B cell (primary cell): ENCODE measurements at regions of chr14 and their contacts with region 1.

Region 1: GRCh38 chr14:53306267-53306721 is 153.2 kb upstream of the DDHD1 start:
- DNase-seq: peak; percentile 52
- ATAC-seq: peak; percentile 36
- H3K4me3 ChIP-seq: peak overlapping the region in 3 of 5 experiments; percentile 26 to 37 (median 29)
- H3K4me3 Mint-ChIP-seq: peak overlapping the region; percentile 23
- H3K27ac ChIP-seq: no peak overlapping the region
- H3K27ac Mint-ChIP-seq: no peak overlapping the region
- H3K4me1 ChIP-seq: peaks cover 6 to 9% of the 10 kb centered on the region in 2 donors
- H3K4me1 Mint-ChIP-seq: peaks cover 11% of the 10 kb centered on the region
- H3K27me3 ChIP-seq: peaks cover 0 to 13% (median 4%) of the 10 kb centered on the region in 4 experiments
- H3K27me3 Mint-ChIP-seq: peaks cover 19% of the 10 kb centered on the region
- CTCF ChIP-seq: peak; percentile 78

Region 2: GRCh38 chr14:51996148-51996746 is 1310.0 kb before region 1 on chr14:
- CTCF ChIA-PET with region 1: no interaction called
- POLR2A ChIA-PET with region 1: interaction called, 10 read pairs
- intact Hi-C with region 1: no loop called
- DNase-seq: peak; percentile 53
- ATAC-seq: no peak
- H3K4me3 ChIP-seq: no peak overlapping the region
- H3K4me3 Mint-ChIP-seq: no peak overlapping the region
- H3K27ac ChIP-seq: no peak overlapping the region
- H3K27ac Mint-ChIP-seq: no peak overlapping the region
- H3K4me1 ChIP-seq: peaks cover 0 to 5% of the 10 kb centered on the region in 2 donors
- H3K4me1 Mint-ChIP-seq: peaks cover 23% of the 10 kb centered on the region
- H3K27me3 ChIP-seq: no peaks in the 10 kb centered on the region
- H3K27me3 Mint-ChIP-seq: no peaks in the 10 kb centered on the region
- CTCF ChIP-seq: peak; percentile 86

Region 3: DNA sequence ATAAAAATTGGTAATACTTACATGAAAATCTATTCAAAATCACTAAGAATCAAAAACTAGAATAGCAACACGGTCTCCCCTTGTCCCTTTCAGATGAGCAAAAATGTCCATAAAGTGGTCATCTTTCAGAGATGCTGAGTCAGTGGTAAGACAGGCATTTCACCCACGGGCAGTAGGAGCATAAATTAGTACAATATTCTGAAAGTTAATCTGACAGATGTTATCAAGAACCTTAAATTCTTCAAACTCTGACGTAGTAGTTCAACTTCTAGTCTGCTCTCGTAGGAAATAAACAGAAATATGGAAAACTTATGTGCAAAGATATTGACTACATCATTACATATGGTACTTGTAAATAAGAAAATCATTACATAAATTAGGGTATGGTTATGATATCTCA is 481.8 kb before region 1 on chr14:
- CTCF ChIA-PET with region 1: interaction called, 46 read pairs
- POLR2A ChIA-PET with region 1: no interaction called
- intact Hi-C with region 1: loop called (anchors 1 kb)
- DNase-seq: no peak
- ATAC-seq: no peak
- H3K4me3 ChIP-seq: no peak overlapping the region
- H3K4me3 Mint-ChIP-seq: no peak overlapping the region
- H3K27ac ChIP-seq: no peak overlapping the region
- H3K27ac Mint-ChIP-seq: no peak overlapping the region
- H3K4me1 ChIP-seq: no peaks in the 10 kb centered on the region
- H3K4me1 Mint-ChIP-seq: no peaks in the 10 kb centered on the region
- H3K27me3 ChIP-seq: peaks cover 0 to 3% (median 0%) of the 10 kb centered on the region in 4 experiments
- H3K27me3 Mint-ChIP-seq: peaks cover 19% of the 10 kb centered on the region
- CTCF ChIP-seq: no peak

Region 4: DNA sequence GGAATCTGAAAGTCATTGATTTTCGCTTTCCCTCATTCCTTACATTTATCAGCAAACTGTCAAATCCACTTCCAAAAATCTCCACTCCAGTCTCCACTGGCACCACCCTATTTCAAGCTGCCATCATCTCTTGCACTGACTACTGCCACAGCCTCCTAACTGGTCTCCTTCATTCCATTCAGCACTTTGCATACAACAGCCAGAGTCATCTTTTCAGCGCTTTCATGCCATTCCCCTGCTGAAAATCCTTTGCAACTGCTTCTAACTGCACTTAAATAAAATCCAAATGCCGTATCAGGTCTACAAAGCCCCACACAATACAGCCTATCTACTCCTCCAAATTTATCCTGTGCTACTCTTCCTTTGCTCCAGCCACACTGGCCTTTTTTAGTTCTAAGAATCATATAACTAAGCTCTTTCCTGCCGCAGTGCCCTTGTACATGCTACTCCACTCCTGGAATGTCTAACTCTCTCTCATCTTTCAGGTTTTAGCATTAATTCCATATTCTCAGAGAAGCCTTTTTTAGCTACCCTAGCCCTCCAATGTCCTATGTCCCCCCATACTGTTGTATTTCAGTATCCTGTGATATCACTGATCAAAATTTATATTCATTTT is 377.0 kb before region 1 on chr14:
- CTCF ChIA-PET with region 1: no interaction called
- POLR2A ChIA-PET with region 1: no interaction called
- intact Hi-C with region 1: no loop called
- DNase-seq: no peak
- ATAC-seq: no peak
- H3K4me3 ChIP-seq: no peak overlapping the region
- H3K4me3 Mint-ChIP-seq: no peak overlapping the region
- H3K27ac ChIP-seq: no peak overlapping the region
- H3K27ac Mint-ChIP-seq: no peak overlapping the region
- H3K4me1 ChIP-seq: no peaks in the 10 kb centered on the region
- H3K4me1 Mint-ChIP-seq: no peaks in the 10 kb centered on the region
- H3K27me3 ChIP-seq: no peaks in the 10 kb centered on the region
- H3K27me3 Mint-ChIP-seq: peaks cover 7% of the 10 kb centered on the region
- CTCF ChIP-seq: no peak

Region 5: GRCh38 chr14:53055003-53055402 is 251.3 kb before region 1 on chr14:
- CTCF ChIA-PET with region 1: interaction called, 11 read pairs
- POLR2A ChIA-PET with region 1: no interaction called
- intact Hi-C with region 1: no loop called
- DNase-seq: peak; percentile 60
- ATAC-seq: peak; percentile 36
- H3K4me3 ChIP-seq: no peak overlapping the region
- H3K4me3 Mint-ChIP-seq: no peak overlapping the region
- H3K27ac ChIP-seq: no peak overlapping the region
- H3K27ac Mint-ChIP-seq: no peak overlapping the region
- H3K4me1 ChIP-seq: no peaks in the 10 kb centered on the region
- H3K4me1 Mint-ChIP-seq: no peaks in the 10 kb centered on the region
- H3K27me3 ChIP-seq: no peaks in the 10 kb centered on the region
- H3K27me3 Mint-ChIP-seq: no peaks in the 10 kb centered on the region
- CTCF ChIP-seq: peak; percentile 92

Region 6: GRCh38 chr14:53217295-53217994 is 88.8 kb before region 1 on chr14:
- CTCF ChIA-PET with region 1: interaction called, 10 read pairs
- POLR2A ChIA-PET with region 1: no interaction called
- intact Hi-C with region 1: loop called (anchors 5 kb)
- DNase-seq: peak; percentile 82
- ATAC-seq: peak; percentile 98
- H3K4me3 ChIP-seq: peak overlapping the region in 4 of 5 experiments; percentile 48 to 68 (median 63)
- H3K4me3 Mint-ChIP-seq: peak overlapping the region; percentile 93
- H3K27ac ChIP-seq: peak overlapping the region in 1 of 2 donors; percentile 2
- H3K27ac Mint-ChIP-seq: peak overlapping the region; percentile 86
- H3K4me1 ChIP-seq: peaks cover 6 to 8% of the 10 kb centered on the region in 2 donors
- H3K4me1 Mint-ChIP-seq: peaks cover 8% of the 10 kb centered on the region
- H3K27me3 ChIP-seq: no peaks in the 10 kb centered on the region
- H3K27me3 Mint-ChIP-seq: no peaks in the 10 kb centered on the region
- CTCF ChIP-seq: peak; percentile 65

Region 7: DNA sequence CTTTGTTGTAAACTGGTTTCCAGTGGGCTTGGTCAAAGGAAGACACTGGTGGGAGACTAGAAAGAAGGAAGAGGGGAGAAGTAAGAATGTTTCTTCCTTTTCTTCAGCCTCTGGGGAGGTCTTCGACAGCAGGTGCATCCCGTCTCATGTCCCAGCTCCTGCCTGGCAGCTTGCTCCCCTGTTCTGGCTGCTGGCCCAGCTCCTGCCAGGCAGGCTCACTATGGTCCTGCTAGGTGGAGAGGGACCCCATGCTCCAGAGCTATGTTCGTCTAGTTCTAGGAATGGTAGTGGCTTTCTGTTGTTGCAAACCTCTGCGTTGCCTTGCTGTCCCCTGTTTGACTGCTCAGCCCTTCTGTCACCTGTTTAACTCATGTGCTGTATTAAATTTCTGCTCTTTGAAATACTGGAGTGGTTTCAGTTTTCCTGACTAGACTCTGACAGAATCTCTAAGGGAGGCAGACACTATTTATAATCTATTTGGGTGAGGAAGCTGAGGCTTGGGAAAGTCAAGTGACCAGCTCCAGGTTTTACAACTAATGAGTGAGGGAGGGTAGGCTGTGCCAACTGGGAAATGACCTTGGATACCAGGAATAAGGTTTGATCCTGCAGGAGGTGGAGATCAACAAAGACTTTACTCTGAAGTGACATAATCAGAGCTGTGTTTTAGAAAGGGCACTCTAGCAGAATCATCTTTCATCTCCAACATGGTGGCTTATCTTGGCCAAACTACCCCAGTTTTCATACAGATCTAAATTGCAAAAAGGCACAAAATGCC is 58.5 kb before region 1 on chr14:
- CTCF ChIA-PET with region 1: no interaction called
- POLR2A ChIA-PET with region 1: no interaction called
- intact Hi-C with region 1: no loop called
- DNase-seq: no peak
- ATAC-seq: no peak
- H3K4me3 ChIP-seq: no peak overlapping the region
- H3K4me3 Mint-ChIP-seq: no peak overlapping the region
- H3K27ac ChIP-seq: no peak overlapping the region
- H3K27ac Mint-ChIP-seq: no peak overlapping the region
- H3K4me1 ChIP-seq: no peaks in the 10 kb centered on the region
- H3K4me1 Mint-ChIP-seq: no peaks in the 10 kb centered on the region
- H3K27me3 ChIP-seq: no peaks in the 10 kb centered on the region
- H3K27me3 Mint-ChIP-seq: no peaks in the 10 kb centered on the region
- CTCF ChIP-seq: no peak

Region 8: DNA sequence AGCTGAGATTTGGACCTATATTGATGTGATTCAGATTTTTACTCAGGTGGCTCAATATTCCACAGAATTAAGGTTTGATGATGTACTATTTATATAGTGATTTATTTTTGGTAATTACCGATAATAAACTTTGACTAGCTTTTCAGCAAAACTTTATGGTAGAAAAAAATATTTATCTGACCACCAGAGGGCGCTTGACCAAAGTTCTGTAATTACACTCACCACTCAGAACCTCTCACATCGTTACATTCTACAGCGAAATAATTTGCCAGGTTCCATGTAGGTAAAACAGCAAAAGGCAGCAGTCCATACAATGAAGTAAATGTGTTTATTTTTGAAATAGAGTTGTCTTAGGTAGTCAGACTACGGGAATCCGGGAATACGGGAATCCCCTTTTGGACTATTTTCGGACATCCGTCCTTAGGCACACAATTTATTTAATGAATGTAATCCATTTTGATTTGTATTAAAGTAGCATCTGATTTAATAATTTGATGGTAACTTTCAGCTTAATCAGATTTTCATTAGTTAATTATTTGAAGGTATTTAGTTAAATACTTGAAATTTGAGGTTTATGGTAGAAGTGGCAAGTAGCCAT is 10.2 kb before region 1 on chr14:
- CTCF ChIA-PET with region 1: interaction called, 42 read pairs
- POLR2A ChIA-PET with region 1: no interaction called
- intact Hi-C with region 1: no loop called
- DNase-seq: peak; percentile 61
- ATAC-seq: no peak
- H3K4me3 ChIP-seq: no peak overlapping the region
- H3K4me3 Mint-ChIP-seq: no peak overlapping the region
- H3K27ac ChIP-seq: no peak overlapping the region
- H3K27ac Mint-ChIP-seq: no peak overlapping the region
- H3K4me1 ChIP-seq: no peaks in the 10 kb centered on the region
- H3K4me1 Mint-ChIP-seq: no peaks in the 10 kb centered on the region
- H3K27me3 ChIP-seq: no peaks in the 10 kb centered on the region
- H3K27me3 Mint-ChIP-seq: no peaks in the 10 kb centered on the region
- CTCF ChIP-seq: peak; percentile 93